Common myeloid progenitor, CD34-positive (primary cell): ENCODE measurements at regions of chr5 and their contacts with region 1.

Region 1: GRCh38 chr5:147935032-147935431 is 28.7 kb upstream of the C5orf46 start:
- DNase-seq: peak; percentile 71 to 83 (median 82)
- H3K4me3 ChIP-seq: no peak overlapping the region
- H3K27ac ChIP-seq: no peak overlapping the region
- H3K4me1 ChIP-seq: peaks cover 0 to 12% (median 1%) of the 10 kb centered on the region in 4 experiments
- H3K27me3 ChIP-seq: no peaks in the 10 kb centered on the region

Region 2: DNA sequence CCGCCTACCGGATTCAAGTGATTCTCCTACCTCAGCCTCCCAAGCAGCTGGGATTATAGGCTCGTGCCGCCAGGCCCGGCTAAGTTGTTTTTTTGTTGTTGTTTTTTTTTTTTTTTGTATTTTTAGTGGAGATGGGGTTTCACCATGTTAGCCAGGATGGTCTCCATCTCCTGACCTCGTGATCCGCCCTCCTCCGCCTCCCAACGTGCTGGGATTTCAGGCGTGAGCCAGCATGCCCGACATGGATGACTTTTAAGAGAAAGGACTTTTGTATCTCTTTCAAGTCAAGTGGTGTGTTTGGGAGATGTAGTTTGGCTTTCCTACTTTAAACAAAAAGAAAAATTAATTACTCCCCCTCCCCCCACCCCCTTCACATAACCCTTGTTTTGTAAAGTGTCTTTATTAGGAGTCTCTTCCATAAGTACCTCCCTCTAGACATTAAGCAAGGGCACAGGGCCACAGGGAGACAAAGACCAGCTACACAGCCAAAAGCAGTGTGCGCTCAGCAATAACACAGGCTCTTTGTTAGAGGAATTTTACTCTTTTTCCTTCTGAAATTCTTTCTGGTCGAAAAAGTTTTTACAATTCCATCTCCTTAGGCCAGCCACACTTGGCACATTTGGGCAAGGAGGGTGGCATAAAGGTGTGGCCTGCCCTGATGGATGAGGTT is 183.7 kb before region 1 on chr5:
- CTCF ChIA-PET with region 1: no interaction called
- POLR2A ChIA-PET with region 1: no interaction called
- DNase-seq: no peak
- H3K4me3 ChIP-seq: no peak overlapping the region
- H3K27ac ChIP-seq: peak overlapping the region in 1 of 2 experiments; percentile 33
- H3K4me1 ChIP-seq: no peaks in the 10 kb centered on the region
- H3K27me3 ChIP-seq: no peaks in the 10 kb centered on the region

Region 3: DNA sequence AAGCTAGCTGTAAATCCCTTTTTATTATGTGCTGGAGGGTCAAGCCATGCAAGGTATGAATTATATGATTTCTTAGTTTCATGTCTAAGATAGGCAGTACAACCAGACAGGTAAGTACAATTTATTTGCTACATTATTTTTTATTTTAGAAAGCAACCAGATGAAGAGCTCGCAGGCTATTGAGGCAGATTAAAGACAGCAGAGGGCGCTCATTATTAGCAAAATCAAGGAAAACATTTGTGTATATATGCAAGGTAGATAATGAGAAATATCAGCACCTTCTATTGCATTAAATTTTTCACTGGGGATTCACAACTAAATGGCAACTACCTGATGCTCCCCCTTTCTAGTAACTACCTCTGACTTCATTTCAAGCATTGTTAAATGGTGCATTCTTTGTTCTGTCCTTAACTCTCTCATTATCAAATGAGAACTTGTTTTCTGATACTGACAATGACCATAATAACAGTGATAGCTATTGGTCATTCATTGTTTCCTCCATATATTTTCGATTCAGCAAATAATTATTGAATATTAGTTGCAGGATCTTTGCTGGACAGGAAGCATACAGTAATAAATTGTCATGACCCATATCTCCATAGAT is 47.9 kb before region 1 on chr5:
- CTCF ChIA-PET with region 1: interaction called, 109 read pairs
- POLR2A ChIA-PET with region 1: no interaction called
- DNase-seq: peak; percentile 58 to 78 (median 72)
- H3K4me3 ChIP-seq: no peak overlapping the region
- H3K27ac ChIP-seq: no peak overlapping the region
- H3K4me1 ChIP-seq: peaks cover 0 to 3% (median 0%) of the 10 kb centered on the region in 4 experiments
- H3K27me3 ChIP-seq: no peaks in the 10 kb centered on the region

Region 4: DNA sequence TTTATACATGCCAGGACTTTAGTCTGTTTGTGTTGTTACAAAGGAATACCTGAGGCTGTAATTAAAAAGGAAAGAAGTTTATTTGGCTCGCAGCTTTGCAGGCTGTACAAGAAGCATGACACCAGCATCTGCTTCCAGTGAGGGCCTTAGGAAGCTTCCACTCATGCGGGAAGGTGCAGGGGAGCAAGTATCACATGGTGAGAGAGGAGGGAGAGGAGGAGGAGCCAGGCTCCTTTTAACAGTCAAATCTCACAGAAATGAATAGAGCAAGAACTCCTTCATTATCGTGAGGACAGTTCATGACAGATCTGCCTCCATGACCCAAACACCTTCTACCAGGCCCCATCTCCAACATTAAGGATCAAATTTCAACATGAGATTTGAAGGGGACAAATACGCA is 10.0 kb before region 1 on chr5:
- CTCF ChIA-PET with region 1: interaction called, 13 read pairs
- POLR2A ChIA-PET with region 1: no interaction called
- DNase-seq: no peak
- H3K4me3 ChIP-seq: no peak overlapping the region
- H3K27ac ChIP-seq: no peak overlapping the region
- H3K4me1 ChIP-seq: peaks cover 9 to 39% (median 22%) of the 10 kb centered on the region in 4 experiments
- H3K27me3 ChIP-seq: no peaks in the 10 kb centered on the region